Posterior cingulate gyrus (tissue), 11 donors: ENCODE measurements at regions of chr5 and their contacts with region 1.

Region 1: DNA sequence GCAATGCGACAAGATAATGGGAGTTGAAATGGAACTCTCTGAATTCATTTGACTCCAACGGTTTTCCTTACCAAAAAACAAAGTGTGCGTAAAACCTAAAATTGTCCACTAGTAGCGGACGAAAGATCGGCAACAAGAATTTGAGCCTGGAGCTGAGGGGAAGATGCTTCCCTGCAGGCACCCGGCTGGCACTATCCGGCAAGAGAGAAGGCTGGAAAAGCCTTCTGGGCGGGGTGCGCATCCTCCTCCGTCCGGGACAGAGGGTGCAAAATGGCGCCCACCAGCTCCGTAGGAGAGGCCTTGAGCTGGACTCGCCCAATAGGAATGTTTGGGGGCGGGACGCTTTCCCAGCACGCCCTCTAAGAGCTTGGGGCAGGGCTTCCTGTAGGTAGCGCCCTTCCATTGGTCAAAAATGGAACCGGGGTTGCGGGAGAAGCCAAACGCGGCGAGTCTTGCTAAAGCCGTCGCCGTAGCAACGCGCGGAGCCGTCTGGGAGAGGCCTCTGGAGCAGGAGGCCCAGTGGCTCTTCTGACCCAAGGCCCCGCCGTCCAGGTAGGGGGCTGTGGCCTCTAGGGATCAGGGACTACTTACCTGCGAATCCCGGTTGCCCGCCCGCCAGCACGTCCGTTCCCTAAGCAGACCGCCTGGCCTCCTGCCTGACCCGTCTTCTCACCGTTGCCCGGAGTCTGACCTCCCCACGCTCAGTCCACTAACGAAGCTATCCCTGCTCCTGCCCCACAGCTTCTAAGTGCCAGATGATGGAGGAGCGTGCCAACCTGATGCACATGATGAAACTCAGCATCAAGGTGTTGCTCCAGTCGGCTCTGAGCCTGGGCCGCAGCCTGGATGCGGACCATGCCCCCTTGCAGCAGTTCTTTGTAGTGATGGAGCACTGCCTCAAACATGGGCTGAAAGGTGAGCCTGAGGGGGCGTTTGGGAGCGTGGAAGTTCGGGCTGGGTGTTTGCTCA is 9.2 kb downstream of the RUFY1 start:
- DNase-seq: peak; percentile 96 to 100 (median 98)

Region 2: DNA sequence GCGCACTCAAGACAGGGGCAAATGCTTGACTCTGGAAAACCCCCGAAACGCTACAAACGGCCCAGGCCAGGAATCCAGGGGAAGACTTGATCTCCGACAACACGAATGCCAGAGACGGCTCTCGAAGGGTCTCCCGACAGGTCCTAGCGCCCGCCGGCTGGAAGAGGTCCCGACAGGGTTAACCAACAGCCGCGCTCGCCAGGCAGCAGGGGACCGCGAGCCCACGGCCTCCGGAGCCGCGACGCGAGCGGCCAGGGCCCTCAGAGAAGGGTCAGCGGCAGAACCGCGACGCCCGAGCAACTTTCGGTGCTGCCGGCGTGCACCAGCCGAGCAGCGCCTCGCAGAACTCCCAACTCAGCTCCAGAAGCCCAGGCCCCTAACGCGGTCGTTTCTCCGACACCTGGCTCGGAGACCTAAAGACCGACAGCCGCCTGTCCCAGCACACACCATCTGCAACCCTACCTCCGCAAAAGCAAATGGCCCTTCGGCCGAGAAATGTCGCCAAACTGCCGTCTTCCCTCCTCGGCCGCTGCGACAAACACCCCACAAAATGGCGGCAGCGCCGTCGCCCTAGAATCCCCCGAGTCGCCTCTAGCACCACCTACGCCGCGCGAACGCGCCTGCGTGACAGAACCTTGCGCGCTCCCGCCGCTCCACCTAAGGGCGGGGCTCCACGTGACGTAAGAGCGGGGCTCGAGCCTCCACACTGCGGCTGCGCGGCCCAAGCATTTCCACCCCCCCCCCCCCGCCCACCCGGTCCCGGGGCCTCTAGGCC is 932.9 kb before region 1 on chr5 and contains the start of gene CLK4:
- intact Hi-C with region 1: loop called (anchors 10 kb)
- DNase-seq: peak; percentile 91 to 99 (median 95)

Region 3: DNA sequence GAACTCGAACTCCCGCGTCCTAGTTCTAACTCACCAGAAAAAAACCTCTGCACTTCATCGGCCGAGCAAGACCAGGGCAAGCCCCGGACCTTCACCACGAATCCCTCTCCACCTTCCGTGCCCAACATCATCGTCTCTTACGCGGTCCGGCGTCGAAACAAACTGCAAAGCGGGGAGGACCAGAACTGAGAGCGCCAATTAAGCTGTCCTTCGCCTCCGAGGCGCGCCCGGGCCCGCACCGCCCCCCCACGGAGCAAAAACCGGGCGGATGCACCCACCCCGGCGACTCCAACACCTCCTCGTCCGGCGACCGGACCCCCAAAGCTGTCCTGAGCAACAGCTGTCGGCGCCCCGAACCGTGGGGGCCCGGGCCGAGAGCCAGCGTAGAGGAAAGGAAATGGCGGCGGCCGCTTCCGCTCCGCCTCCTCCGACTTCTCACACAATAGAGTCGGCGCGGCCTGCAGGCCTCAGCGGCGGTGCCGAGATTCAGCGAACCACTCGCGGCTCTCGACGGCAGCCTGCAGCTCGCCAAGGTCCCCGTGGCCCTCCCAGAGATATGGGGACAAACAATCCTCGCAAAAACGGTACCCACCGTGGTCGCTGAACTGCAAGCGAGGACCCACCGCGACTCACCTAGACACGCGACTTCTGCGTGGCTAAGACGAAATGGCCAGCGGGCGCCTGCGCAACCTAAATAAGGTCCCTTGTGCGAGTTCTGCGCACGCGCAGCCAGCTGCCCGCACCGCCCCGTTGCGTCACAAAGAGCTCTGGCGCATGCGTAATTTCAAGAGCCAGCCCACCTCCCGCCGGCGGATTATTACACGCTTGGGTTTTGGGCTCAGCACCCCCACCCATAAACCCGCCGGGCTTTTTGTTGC is 63.7 kb after region 1 on chr5 and contains the start of gene HNRNPH1:
- intact Hi-C with region 1: loop called (anchors 5 kb)
- DNase-seq: peak in 9 of 10 donors; percentile 97 to 100 (median 97)